Cardiac septum (tissue), 1 donor: ENCODE measurements at regions of chr16 and their contacts with region 1.

Region 1: GRCh38 chr16:88437373-88437964 is 15.6 kb upstream of the ZFPM1 start:
- DNase-seq: no peak

Region 2: GRCh38 chr16:87982491-87983415 is 454.7 kb before region 1 on chr16:
- intact Hi-C with region 1: loop called (anchors 5 kb)
- DNase-seq: no peak

Region 3: GRCh38 chr16:88686439-88687253 is 249.2 kb after region 1 on chr16 and contains the start of gene SNAI3:
- intact Hi-C with region 1: no loop called
- DNase-seq: peak; percentile 96
- total RNA-seq, gene SNAI3: 0.97 TPM

Region 4: DNA sequence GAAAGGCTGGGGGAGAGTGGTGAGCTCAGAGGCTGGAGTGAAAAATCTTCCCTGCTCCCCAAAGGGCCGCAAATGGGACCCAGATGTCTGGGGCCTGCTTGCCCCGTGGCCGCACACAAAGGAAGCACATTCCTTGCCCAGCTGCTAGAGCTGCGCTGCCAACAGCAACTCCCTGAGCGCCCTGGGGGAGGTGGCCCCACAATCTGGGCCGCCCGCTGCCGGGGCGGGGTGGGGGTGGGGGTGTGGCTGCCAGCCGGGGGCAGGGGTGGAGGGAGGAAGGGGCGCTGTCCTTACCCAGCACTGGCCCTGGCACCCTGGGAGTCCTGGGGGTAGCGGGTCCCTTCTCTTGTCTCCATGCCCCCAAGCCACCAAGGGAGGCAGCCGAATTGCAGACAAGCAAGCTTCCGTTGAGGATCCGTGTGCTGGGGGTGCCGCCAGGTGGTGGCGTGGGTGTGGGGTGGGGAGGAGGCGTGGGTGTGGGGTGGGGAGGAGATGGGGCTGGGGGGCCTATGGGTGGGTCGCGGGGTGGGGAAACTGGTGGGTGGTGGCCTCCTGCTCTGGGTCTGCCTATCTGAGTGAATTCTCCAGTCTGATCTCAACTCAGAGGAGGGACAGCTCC is 477.4 kb after region 1 on chr16:
- intact Hi-C with region 1: no loop called
- DNase-seq: no peak